Activated CD8-positive, alpha-beta T cell treated with anti-CD3 and anti-CD28 coated beads for 36 hours (primary cell): ENCODE measurements at regions of chr6 and their contacts with region 1.

Region 1: GRCh38 chr6:6008648-6009421 is 2.1 kb upstream of the NRN1 start:
- DNase-seq: peak; percentile 80
- ATAC-seq: peak; percentile 67
- H3K4me3 Mint-ChIP-seq: peak overlapping the region; percentile 79
- H3K27ac Mint-ChIP-seq: peak overlapping the region; percentile 85
- H3K4me1 Mint-ChIP-seq: peaks cover 38% of the 10 kb centered on the region
- H3K27me3 Mint-ChIP-seq: peaks cover 62% of the 10 kb centered on the region
- CTCF ChIP-seq: no peak

Region 2: GRCh38 chr6:5995949-5996713 is 12.7 kb before region 1 on chr6:
- CTCF ChIA-PET with region 1: interaction called, 18 read pairs
- POLR2A ChIA-PET with region 1: interaction called, 4 read pairs
- intact Hi-C with region 1: no loop called
- DNase-seq: peak; percentile 30
- ATAC-seq: peak; percentile 22
- H3K4me3 Mint-ChIP-seq: peak overlapping the region; percentile 76
- H3K27ac Mint-ChIP-seq: no peak overlapping the region
- H3K4me1 Mint-ChIP-seq: peaks cover 47% of the 10 kb centered on the region
- H3K27me3 Mint-ChIP-seq: peaks cover 87% of the 10 kb centered on the region
- CTCF ChIP-seq: no peak

Region 3: GRCh38 chr6:6588064-6588923 is 579.5 kb after region 1 on chr6 and contains the start of gene LY86:
- CTCF ChIA-PET with region 1: no interaction called
- POLR2A ChIA-PET with region 1: no interaction called
- intact Hi-C with region 1: no loop called
- DNase-seq: peak; percentile 25
- ATAC-seq: peak; percentile 32
- H3K4me3 Mint-ChIP-seq: peak within 1 kb of the TSS; percentile 61
- H3K27ac Mint-ChIP-seq: peak within 1 kb of the TSS; percentile 74
- H3K4me1 Mint-ChIP-seq: peaks cover 49% of the 10 kb centered on the region
- H3K27me3 Mint-ChIP-seq: no peaks in the 10 kb centered on the region
- CTCF ChIP-seq: no peak
- total RNA-seq, gene LY86: 0.32 TPM in 1 of 2 experiments, not detected in the other